ENCODE measurements at regions of chr4 and their contacts with region 1.

Region 1: GRCh38 chr4:101328063-101328602 is 19.2 kb downstream of the PPP3CA start:
- DNase-seq: peak; percentile 37
- H3K4me3 Mint-ChIP-seq: peak overlapping the region; percentile 63
- H3K27ac Mint-ChIP-seq: peak overlapping the region; percentile 65
- H3K4me1 Mint-ChIP-seq: peaks cover 48% of the 10 kb centered on the region
- H3K27me3 Mint-ChIP-seq: peaks cover 2% of the 10 kb centered on the region

Region 2: GRCh38 chr4:99855678-99856077 is 1472.5 kb before region 1 on chr4:
- CTCF ChIA-PET with region 1: no interaction called
- POLR2A ChIA-PET with region 1: no interaction called
- intact Hi-C with region 1: loop called (anchors 5 kb)
- DNase-seq: peak; percentile 37
- H3K4me3 Mint-ChIP-seq: no peak overlapping the region
- H3K27ac Mint-ChIP-seq: peak overlapping the region; percentile 7
- H3K4me1 Mint-ChIP-seq: peaks cover 70% of the 10 kb centered on the region
- H3K27me3 Mint-ChIP-seq: no peaks in the 10 kb centered on the region

Region 3: GRCh38 chr4:100469555-100469954 is 858.6 kb before region 1 on chr4:
- CTCF ChIA-PET with region 1: no interaction called
- POLR2A ChIA-PET with region 1: no interaction called
- intact Hi-C with region 1: no loop called
- DNase-seq: no peak
- H3K4me3 Mint-ChIP-seq: no peak overlapping the region
- H3K27ac Mint-ChIP-seq: no peak overlapping the region
- H3K4me1 Mint-ChIP-seq: no peaks in the 10 kb centered on the region
- H3K27me3 Mint-ChIP-seq: peaks cover 1% of the 10 kb centered on the region

Region 4: GRCh38 chr4:101037938-101038413 is 290.2 kb before region 1 on chr4:
- CTCF ChIA-PET with region 1: no interaction called
- POLR2A ChIA-PET with region 1: no interaction called
- intact Hi-C with region 1: loop called (anchors 1 kb)
- DNase-seq: peak; percentile 44
- H3K4me3 Mint-ChIP-seq: no peak overlapping the region
- H3K27ac Mint-ChIP-seq: peak overlapping the region; percentile 52
- H3K4me1 Mint-ChIP-seq: peaks cover 27% of the 10 kb centered on the region
- H3K27me3 Mint-ChIP-seq: no peaks in the 10 kb centered on the region

Region 5: DNA sequence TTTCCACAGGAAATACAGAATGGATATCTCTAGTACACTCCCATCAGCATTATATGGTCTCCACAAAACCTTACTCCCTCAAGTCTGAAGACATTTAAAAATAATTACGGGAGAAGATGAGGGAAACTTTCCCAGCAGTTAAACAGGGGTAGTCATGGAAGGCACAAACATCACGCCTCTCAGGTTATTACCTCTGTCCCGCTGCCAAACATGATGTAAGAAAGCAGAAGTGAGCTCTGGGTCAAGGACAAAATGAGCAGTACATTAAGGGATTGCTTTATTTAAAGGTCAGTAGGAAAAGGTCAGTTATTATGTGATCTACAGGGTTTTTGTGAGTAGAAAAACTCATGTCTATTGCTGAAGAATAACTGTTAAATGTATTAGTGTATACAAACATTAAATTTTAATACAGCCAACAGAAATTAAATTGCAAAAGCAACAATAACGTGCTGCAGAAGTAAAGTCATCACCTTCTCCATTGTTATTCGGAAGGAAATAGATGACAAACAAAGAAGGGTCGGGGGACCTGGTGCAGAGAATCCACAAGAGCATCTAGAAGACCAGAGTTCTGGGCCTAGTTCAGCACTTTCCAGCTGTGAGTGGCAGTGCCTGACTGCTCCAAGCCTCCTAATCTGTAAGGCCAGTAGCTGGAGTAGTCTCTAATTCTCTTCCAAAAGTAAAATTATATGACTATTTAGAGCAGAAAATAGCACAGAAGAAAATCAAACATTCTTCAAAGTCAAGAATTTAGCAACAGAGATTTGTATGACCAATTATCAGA is 152.0 kb before region 1 on chr4:
- CTCF ChIA-PET with region 1: no interaction called
- POLR2A ChIA-PET with region 1: no interaction called
- intact Hi-C with region 1: loop called (anchors 2 kb)
- DNase-seq: no peak
- H3K4me3 Mint-ChIP-seq: no peak overlapping the region
- H3K27ac Mint-ChIP-seq: no peak overlapping the region
- H3K4me1 Mint-ChIP-seq: peaks cover 38% of the 10 kb centered on the region
- H3K27me3 Mint-ChIP-seq: no peaks in the 10 kb centered on the region

Region 6: DNA sequence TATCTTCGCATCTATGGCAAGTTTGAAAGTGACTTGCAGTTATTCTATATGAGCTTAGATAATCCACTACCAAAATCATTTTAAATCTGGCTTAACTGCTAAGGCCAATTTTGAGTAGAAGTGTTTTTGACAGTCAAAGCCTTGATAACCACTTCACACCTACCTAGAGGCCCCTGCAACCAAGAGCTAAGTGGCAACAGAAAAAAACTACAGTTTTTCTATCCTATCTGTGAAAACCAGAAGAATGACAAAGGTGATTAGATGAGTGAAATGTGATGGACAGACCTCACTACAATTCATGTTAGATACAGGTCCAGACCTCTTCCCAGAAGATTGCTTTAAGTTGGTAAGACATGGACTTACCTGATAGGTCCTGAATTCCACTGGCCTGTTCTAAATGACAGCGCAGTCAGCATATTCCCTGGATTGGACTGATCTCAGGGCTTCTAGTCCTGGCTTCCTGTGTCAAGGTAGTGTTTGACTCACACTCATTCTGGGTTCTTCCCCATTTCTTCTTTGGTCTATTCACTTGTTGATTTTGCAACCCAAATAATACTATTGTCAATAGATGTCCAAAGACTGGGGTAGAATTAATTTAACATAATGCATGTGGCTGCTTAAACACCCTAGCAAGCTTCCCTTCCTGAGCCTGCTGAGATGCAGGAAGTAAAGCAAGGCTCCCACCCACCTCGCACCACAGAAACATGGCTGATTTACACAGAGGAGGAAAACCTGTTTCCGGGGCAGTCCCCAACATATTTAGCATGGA is 45.9 kb before region 1 on chr4:
- CTCF ChIA-PET with region 1: no interaction called
- POLR2A ChIA-PET with region 1: no interaction called
- intact Hi-C with region 1: loop called (anchors 2 kb)
- DNase-seq: peak; percentile 67
- H3K4me3 Mint-ChIP-seq: no peak overlapping the region
- H3K27ac Mint-ChIP-seq: no peak overlapping the region
- H3K4me1 Mint-ChIP-seq: peaks cover 58% of the 10 kb centered on the region
- H3K27me3 Mint-ChIP-seq: no peaks in the 10 kb centered on the region

Region 7: DNA sequence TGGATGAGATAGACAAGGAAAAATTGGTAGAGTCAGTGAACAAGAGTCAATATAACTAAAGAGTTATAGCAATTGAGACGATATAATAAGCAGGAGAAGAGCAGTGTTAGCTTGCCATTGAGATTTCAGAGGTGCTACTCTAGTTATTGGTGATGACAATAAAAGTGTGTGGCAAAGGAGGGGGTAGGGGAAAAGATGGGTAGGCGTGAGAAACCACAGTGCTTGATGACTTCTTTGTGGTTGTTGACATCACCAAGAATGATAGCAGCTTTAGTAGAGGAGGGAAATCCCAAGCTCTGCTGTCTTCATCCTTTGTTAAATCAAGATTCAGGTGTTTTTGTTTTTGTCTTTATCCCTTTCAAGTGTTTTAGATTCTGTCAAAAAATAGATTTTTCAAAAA is 199.1 kb after region 1 on chr4:
- CTCF ChIA-PET with region 1: no interaction called
- POLR2A ChIA-PET with region 1: no interaction called
- intact Hi-C with region 1: loop called (anchors 1 kb)
- DNase-seq: peak; percentile 87
- H3K4me3 Mint-ChIP-seq: peak overlapping the region; percentile 12
- H3K27ac Mint-ChIP-seq: peak overlapping the region; percentile 30
- H3K4me1 Mint-ChIP-seq: peaks cover 20% of the 10 kb centered on the region
- H3K27me3 Mint-ChIP-seq: peaks cover 38% of the 10 kb centered on the region

Measured in activated CD4-positive, alpha-beta memory T cell treated with anti-CD3 and anti-CD28 coated beads for 36 hours (primary cell).